Heart right ventricle (tissue), 16 donors: ENCODE measurements at regions of chr7 and their contacts with region 1.

Region 1: DNA sequence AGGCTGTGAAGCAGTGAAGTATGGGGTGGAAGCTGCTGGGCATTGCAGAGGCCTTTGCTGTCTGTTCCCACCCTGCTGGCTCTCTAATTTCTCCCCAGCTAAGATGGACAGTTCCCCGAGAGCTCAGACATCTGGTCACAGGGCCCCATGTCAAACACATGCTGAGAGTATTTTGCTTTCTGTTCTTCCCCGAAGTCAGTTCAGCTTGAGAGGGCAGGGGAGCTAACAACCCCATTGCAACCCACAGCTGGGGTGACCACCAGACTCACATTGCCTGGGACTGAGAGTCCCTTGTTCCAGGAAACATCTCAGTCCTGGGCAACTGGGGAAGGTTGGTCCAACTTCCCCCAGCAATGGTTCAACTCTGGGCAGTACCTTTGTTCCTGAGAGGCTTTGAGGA is 52.8 kb downstream of the ABCA13 start:
- DNase-seq: no peak
- ATAC-seq: no peak
- H3K4me3 ChIP-seq: no peak overlapping the region
- H3K27ac ChIP-seq: no peak overlapping the region
- H3K4me1 ChIP-seq: no peaks in the 10 kb centered on the region
- H3K27me3 ChIP-seq: peaks cover 0 to 4% (median 0%) of the 10 kb centered on the region in 7 donors
- CTCF ChIP-seq: no peak

Region 2: GRCh38 chr7:48289656-48290055 is 65.6 kb after region 1 on chr7:
- intact Hi-C with region 1: loop called in 1 of 10 experiments (anchors 2 kb)
- DNase-seq: no peak
- ATAC-seq: peak in 2 of 8 donors; percentile 24
- H3K4me3 ChIP-seq: no peak overlapping the region
- H3K27ac ChIP-seq: no peak overlapping the region
- H3K4me1 ChIP-seq: no peaks in the 10 kb centered on the region
- H3K27me3 ChIP-seq: peaks cover 0 to 5% (median 0%) of the 10 kb centered on the region in 7 donors
- CTCF ChIP-seq: no peak

Region 3: GRCh38 chr7:48398191-48398590 is 174.1 kb after region 1 on chr7:
- intact Hi-C with region 1: no loop called
- DNase-seq: no peak
- ATAC-seq: no peak
- H3K4me3 ChIP-seq: no peak overlapping the region
- H3K27ac ChIP-seq: no peak overlapping the region
- H3K4me1 ChIP-seq: no peaks in the 10 kb centered on the region
- H3K27me3 ChIP-seq: peaks cover 0 to 5% (median 0%) of the 10 kb centered on the region in 7 donors
- CTCF ChIP-seq: no peak